A673 (cell line): ENCODE measurements at regions of chr17 and their contacts with region 1.

Region 1: GRCh38 chr17:61601297-61601696 is 10.3 kb upstream of the NACA2 start:
- DNase-seq: no peak
- H3K4me3 ChIP-seq: no peak overlapping the region
- H3K27ac ChIP-seq: no peak overlapping the region
- H3K4me1 ChIP-seq: no peaks in the 10 kb centered on the region
- H3K27me3 ChIP-seq: peaks cover 24% of the 10 kb centered on the region
- CTCF ChIP-seq: no peak

Region 2: DNA sequence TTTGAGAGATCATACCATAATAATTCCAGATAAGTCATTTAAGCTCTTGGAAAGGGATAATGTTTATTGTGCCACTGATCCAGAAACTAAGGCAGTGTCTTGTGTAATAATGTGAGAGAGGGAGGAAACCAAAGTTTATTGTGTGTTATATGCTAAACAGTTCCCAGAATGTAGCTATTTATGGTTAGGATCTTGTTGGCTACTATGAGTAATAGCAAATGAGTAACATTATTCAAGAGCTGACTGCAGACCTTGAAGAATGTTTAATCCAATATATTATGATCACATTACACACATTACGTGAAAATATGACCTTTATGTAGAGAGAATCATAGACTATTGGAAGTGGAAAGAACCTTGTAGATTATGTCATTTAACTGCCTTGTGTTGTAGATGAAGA is 784.1 kb before region 1 on chr17:
- CTCF ChIA-PET with region 1: no interaction called
- POLR2A ChIA-PET with region 1: no interaction called
- intact Hi-C with region 1: no loop called
- DNase-seq: peak; percentile 18
- H3K4me3 ChIP-seq: no peak overlapping the region
- H3K27ac ChIP-seq: no peak overlapping the region
- H3K4me1 ChIP-seq: no peaks in the 10 kb centered on the region
- H3K27me3 ChIP-seq: no peaks in the 10 kb centered on the region
- CTCF ChIP-seq: no peak

Region 3: GRCh38 chr17:61574542-61575174 is 26.6 kb before region 1 on chr17:
- CTCF ChIA-PET with region 1: no interaction called
- POLR2A ChIA-PET with region 1: no interaction called
- intact Hi-C with region 1: no loop called
- DNase-seq: peak; percentile 30
- H3K4me3 ChIP-seq: no peak overlapping the region
- H3K27ac ChIP-seq: no peak overlapping the region
- H3K4me1 ChIP-seq: no peaks in the 10 kb centered on the region
- H3K27me3 ChIP-seq: no peaks in the 10 kb centered on the region
- CTCF ChIP-seq: peak; percentile 42

Region 4: GRCh38 chr17:61611673-61612022 is 10.4 kb after region 1 on chr17:
- CTCF ChIA-PET with region 1: no interaction called
- POLR2A ChIA-PET with region 1: interaction called, 17 read pairs
- intact Hi-C with region 1: no loop called
- DNase-seq: no peak
- H3K4me3 ChIP-seq: no peak overlapping the region
- H3K27ac ChIP-seq: no peak overlapping the region
- H3K4me1 ChIP-seq: no peaks in the 10 kb centered on the region
- H3K27me3 ChIP-seq: no peaks in the 10 kb centered on the region
- CTCF ChIP-seq: no peak